ENCODE measurements at regions of chr4 and their contacts with region 1.

Region 1: GRCh38 chr4:38667085-38667893 is 3.3 kb downstream of the KLF3 start:
- DNase-seq: peak; percentile 93
- H3K4me3 ChIP-seq: peak overlapping the region; percentile 80
- H3K27ac ChIP-seq: peak overlapping the region; percentile 98
- H3K4me1 ChIP-seq: peaks cover 27% of the 10 kb centered on the region
- H3K27me3 ChIP-seq: no peaks in the 10 kb centered on the region
- CTCF ChIP-seq: no peak

Region 2: DNA sequence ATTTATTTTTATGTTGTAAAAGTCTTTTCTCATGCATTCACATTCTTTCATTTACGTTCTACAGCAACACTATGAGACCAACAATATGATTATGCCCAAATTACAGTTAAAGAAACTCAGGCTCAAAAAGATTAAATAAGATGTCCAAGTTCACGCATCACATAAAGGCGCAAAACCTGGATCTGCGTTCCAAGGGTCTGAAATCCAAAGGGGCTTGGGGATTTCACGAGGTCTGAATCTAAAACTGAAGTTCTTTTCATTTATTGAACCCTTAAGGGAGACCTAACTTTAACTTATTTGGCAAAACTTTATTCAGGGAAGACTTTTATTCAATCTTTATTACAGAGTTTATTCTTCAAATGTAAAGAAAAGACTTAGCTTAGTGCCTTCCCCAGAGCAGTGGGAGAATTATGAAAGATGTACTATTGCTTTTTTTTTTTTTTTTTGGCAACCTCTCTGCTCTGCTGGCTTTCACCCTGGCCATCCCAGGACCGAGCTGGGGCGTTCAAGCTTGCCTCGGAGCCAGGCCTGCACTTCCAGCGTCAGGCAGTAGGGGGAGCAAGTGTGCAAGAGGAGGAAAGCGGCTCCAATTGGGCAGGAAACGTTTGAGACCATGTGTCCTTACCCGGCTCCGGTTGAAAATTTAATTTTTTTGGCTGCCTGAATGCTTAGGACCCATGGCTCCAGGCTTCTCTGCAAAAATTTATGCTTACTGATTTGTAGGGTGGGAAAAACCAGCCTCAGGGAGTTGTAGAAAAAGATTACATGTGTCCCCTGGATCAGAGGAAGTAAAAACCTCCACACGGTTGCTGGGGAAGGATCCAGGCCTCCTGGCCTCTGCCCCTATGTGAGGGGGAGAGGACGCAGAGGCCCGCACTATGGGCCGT is 347.6 kb before region 1 on chr4:
- intact Hi-C with region 1: loop called (anchors 2 kb)
- DNase-seq: peak; percentile 99
- H3K4me3 ChIP-seq: peak overlapping the region; percentile 26
- H3K27ac ChIP-seq: peak overlapping the region; percentile 92
- H3K4me1 ChIP-seq: peaks cover 7% of the 10 kb centered on the region
- H3K27me3 ChIP-seq: no peaks in the 10 kb centered on the region
- CTCF ChIP-seq: peak; percentile 99

Measured in colonic mucosa (tissue), 4 donors.